Aorta (tissue), 5 donors: ENCODE measurements at regions of chr5 and their contacts with region 1.

Region 1: DNA sequence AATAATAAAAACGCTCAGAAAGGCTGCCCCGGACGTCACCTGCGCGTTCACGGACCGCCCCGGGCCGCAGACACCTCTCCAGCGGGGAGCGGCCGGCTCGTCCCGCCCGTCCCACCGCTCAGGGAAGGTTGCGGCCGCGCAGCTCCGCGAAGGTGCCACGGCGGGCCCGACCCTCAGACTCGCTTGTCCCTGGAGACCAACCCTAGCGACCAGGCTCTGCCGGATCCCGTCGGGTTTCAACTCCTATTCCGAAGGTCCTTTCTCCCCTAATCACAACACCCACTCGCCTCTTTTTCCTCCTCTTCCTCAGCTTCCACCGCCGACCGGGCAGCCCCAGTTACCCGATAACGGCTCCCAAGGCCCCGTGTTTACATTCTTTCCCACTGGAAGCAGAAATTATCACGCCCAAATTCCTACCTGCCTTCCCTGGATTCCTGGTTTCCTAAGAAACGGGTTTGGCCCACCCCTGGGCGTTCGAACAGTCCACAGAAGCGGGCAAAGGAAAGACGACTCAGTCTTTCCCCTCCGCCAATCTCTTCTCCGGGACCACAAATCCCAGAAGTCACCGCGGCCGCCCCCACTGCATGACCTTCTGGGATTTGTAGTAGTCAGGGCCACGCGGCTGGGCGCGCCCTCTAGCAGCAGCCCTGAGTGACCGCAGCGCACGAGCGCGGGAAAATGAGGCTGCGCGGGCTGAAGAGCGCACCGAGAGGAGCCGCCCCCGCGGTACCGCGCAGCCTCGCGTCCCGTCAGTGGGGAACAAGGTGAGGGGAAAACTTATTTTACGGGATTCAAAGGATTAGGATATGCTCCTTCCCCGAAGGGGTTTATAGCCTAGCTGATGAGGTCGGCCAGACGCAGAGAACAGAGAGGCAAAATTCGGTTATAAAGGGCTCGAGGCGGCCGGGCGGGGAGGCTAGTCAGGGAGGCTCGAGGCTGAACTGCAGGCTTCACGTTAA is at the start of gene TTC33:
- DNase-seq: peak; percentile 97 to 99
- ATAC-seq: peak; percentile 99
- H3K4me3 ChIP-seq: peak within 1 kb of the TSS; percentile 67 to 83
- H3K27ac ChIP-seq: peak within 1 kb of the TSS; percentile 16 to 90
- H3K4me1 ChIP-seq: peaks cover 0 to 4% of the 10 kb centered on the region in 2 donors
- H3K27me3 ChIP-seq: no peaks in the 10 kb centered on the region
- total RNA-seq, gene TTC33: 18.7 to 19.4 TPM

Region 2: GRCh38 chr5:40386289-40386688 is 369.4 kb before region 1 on chr5:
- intact Hi-C with region 1: no loop called
- DNase-seq: peak in 1 of 2 donors; percentile 37
- ATAC-seq: no peak
- H3K4me3 ChIP-seq: no peak overlapping the region
- H3K27ac ChIP-seq: no peak overlapping the region
- H3K4me1 ChIP-seq: peaks cover 0 to 2% of the 10 kb centered on the region in 2 donors
- H3K27me3 ChIP-seq: no peaks in the 10 kb centered on the region

Region 3: GRCh38 chr5:40798012-40798855 is 42.5 kb after region 1 on chr5 and contains the start of gene PRKAA1:
- intact Hi-C with region 1: loop called in 1 of 2 experiments (anchors 2 kb)
- DNase-seq: peak; percentile 93 to 96
- ATAC-seq: peak; percentile 99
- H3K4me3 ChIP-seq: peak within 1 kb of the TSS; percentile 93 to 98
- H3K27ac ChIP-seq: peak within 1 kb of the TSS; percentile 64 to 86
- H3K4me1 ChIP-seq: peaks cover 0 to 5% of the 10 kb centered on the region in 2 donors
- H3K27me3 ChIP-seq: no peaks in the 10 kb centered on the region
- total RNA-seq, gene PRKAA1: 103 to 104 TPM